K562 (cell line): ENCODE measurements at regions of chr22 and their contacts with region 1.

Region 1: GRCh38 chr22:20763630-20764470 is 10.1 kb upstream of the SERPIND1 start:
- DNase-seq: no peak
- ATAC-seq: no peak
- H3K4me3 ChIP-seq: no peak overlapping the region
- H3K27ac ChIP-seq: no peak overlapping the region
- H3K4me1 ChIP-seq: peaks cover 2 to 4% of the 10 kb centered on the region in 2 experiments; a peak in 4 of 5 replicates
- H3K27me3 ChIP-seq: no peaks in the 10 kb centered on the region
- CTCF ChIP-seq: no peak
- EP300 ChIP-seq: no peak
- POLR2A ChIP-seq: no peak
- RAD21 ChIP-seq: no peak

Region 2: DNA sequence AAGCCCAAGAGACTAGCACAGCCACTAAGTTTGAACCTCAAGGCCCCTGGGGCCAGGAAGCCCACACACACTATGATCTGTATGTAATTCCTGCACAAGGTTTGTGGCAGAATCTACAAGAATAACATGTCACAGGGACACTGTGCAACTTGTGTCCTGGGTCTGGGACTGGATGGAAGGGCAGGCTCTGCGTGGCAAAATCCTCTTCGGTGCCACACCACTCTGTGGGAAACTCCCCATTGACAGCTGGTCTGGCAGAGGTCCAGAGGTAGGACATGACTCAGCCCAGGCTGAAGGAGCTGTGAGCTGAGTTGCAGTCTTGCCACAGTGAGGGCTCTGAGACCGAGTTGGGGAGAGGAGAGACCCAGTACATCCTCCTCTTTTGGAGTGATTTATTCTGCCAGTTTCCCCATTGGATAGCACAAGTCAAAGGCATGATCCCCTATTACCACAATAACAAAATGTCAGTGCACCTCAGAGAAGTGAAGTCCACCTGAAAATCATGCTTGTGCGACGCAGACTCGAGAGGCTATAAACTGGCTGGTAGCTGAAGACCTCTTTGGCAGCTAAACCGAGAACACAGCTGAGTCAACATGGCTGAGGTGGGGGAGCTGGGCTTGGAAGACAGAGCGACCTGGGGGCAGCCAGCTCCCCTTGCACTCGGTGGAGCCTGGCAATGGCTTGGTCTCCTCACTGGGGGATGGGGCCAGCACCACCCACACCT is 13.2 kb before region 1 on chr22:
- CTCF ChIA-PET with region 1: no interaction called
- POLR2A ChIA-PET with region 1: interaction called, 27 read pairs
- in situ Hi-C with region 1: no loop called
- intact Hi-C with region 1: no loop called
- DNase-seq: peak in 3 of 4 experiments; percentile 70 to 78 (median 77)
- ATAC-seq: peak; percentile 79
- H3K4me3 ChIP-seq: no peak overlapping the region
- H3K27ac ChIP-seq: no peak overlapping the region
- H3K4me1 ChIP-seq: peaks cover 4 to 14% of the 10 kb centered on the region in 2 experiments; a peak in 3 of 5 replicates
- H3K27me3 ChIP-seq: no peaks in the 10 kb centered on the region
- CTCF ChIP-seq: no peak
- EP300 ChIP-seq: no peak
- POLR2A ChIP-seq: no peak
- RAD21 ChIP-seq: no peak

Region 3: DNA sequence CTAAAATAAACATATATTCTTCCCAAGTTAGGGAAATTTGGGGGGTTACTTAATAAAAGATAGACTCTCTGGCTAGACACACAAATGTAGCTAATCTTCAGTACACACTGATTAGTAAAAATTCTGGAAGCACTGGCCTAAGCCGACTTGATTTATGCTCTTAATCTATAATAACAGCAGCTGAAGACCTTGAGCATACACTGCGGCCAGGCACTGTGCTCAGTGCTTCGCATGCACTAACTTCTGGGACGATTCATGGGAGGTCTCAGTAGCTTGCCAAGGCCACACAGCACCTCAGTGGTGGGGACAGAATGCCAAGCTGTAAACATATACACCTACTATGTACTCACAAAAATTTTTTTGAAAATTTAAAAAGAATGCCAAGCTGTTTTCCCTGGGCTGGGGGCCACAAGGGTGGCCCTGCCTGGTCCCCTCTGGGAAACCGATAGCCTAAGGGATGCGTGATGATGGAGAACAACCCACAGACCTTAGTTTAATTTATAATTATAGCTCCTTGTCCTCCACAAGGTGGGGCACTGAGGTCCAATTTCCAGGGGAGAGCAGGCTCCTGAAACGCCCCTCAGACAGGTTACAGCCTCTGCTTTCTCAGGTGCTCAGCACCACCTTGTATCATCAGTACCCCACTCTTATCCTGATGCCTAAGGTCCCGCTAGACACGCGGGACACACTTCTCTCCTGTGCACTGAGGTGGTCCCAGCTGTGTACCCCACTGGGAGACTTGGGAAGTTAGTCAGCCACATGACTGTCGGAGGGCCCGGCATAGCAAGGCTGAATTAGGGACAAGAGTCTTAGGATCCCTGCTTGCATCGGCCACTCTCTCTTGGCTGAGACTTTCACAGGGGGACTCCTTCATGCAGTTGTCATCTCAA is 30.1 kb after region 1 on chr22:
- CTCF ChIA-PET with region 1: no interaction called
- POLR2A ChIA-PET with region 1: interaction called, 12 read pairs
- in situ Hi-C with region 1: no loop called
- intact Hi-C with region 1: no loop called
- DNase-seq: peak in 1 of 4 experiments; percentile 52
- ATAC-seq: peak; percentile 56
- H3K4me3 ChIP-seq: no peak overlapping the region
- H3K27ac ChIP-seq: no peak overlapping the region
- H3K4me1 ChIP-seq: 0 out of 5 replicates have a peak, but pooled peaks cover 0 to 3% of the 10 kb centered on the region in 2 experiments
- H3K27me3 ChIP-seq: no peaks in the 10 kb centered on the region
- CTCF ChIP-seq: peak; percentile 46 to 50 (median 49)
- EP300 ChIP-seq: no peak
- POLR2A ChIP-seq: no peak
- RAD21 ChIP-seq: peak in 1 of 2 experiments; percentile 46; a peak in 2 of 4 replicates